ENCODE measurements at regions of chr6 and their contacts with region 1.

Region 1: DNA sequence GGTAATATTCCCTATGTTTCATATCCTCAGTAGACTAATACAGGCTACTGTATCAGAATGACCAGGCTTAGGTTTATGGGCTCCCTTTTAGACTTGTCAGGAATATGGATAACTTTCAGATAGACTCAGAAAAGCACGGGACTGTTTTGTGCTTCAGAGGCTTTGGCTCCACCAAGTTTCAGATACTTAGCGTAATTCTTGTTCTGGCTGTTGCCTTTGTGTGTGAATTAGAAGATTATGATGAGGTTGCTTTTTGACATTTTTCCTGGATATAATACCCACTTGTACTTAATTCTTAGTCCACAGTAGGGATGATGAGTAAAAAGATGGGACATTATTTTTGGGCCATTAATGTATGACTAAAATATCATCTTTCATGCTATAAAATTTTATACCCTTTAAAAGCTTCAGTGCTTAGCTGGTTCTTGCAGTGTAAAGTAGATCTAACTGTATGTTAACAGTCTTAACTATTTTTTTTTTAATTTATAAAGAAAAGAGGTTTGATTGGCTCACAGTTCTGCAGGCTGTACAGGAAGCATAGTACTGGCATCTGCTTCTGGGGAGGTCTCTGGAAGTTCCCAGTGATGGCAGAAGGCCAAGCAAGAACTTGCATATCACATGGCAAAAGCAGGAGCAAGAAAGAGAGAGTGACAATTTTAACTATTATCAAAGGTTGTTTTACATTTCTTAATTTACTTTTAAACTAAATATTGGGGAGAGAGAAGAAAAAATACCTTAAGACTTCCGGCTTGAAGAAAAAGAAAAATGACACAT is 120.7 kb downstream of the ZFAND3 start:
- DNase-seq: no peak
- ATAC-seq: no peak
- H3K4me3 ChIP-seq: no peak overlapping the region
- H3K4me3 Mint-ChIP-seq: no peak overlapping the region
- H3K27ac ChIP-seq: no peak overlapping the region
- H3K27ac Mint-ChIP-seq: no peak overlapping the region
- H3K4me1 ChIP-seq: peaks cover 3 to 38% of the 10 kb centered on the region in 2 donors
- H3K4me1 Mint-ChIP-seq: peaks cover 62% of the 10 kb centered on the region
- H3K27me3 ChIP-seq: no peaks in the 10 kb centered on the region
- H3K27me3 Mint-ChIP-seq: no peaks in the 10 kb centered on the region
- CTCF ChIP-seq: no peak

Region 2: DNA sequence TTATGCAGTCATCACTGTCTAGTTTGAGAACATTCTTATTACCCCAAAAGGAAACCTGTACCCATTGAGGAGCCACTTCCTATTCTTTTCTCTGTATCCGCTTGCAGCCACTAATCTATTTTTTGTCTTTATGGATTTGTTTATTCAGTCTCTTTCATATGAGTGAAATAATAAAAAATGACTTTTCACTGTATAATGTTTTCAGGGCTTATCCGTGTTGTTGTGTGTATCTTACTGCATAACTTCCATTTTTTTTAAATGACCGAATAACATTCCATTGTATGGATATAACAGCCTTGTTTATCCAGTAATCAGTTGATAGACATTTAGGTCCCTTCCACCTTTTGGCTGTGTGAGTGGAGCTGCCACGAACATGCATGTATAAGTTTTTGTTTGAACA is 34.1 kb before region 1 on chr6:
- CTCF ChIA-PET with region 1: interaction called, 3 read pairs
- POLR2A ChIA-PET with region 1: no interaction called
- intact Hi-C with region 1: loop called (anchors 5 kb)
- DNase-seq: no peak
- ATAC-seq: no peak
- H3K4me3 ChIP-seq: no peak overlapping the region
- H3K4me3 Mint-ChIP-seq: no peak overlapping the region
- H3K27ac ChIP-seq: no peak overlapping the region
- H3K27ac Mint-ChIP-seq: no peak overlapping the region
- H3K4me1 ChIP-seq: peaks cover 5 to 12% of the 10 kb centered on the region in 2 donors
- H3K4me1 Mint-ChIP-seq: peaks cover 53% of the 10 kb centered on the region
- H3K27me3 ChIP-seq: no peaks in the 10 kb centered on the region
- H3K27me3 Mint-ChIP-seq: no peaks in the 10 kb centered on the region
- CTCF ChIP-seq: no peak